ENCODE measurements at regions of chr6 and their contacts with region 1.

Region 1: GRCh38 chr6:140124498-140124897 is 750.0 kb upstream of the CITED2 start:
- DNase-seq: no peak
- ATAC-seq: no peak
- H3K4me3 ChIP-seq: no peak overlapping the region
- H3K4me3 Mint-ChIP-seq: no peak overlapping the region
- H3K27ac ChIP-seq: no peak overlapping the region
- H3K27ac Mint-ChIP-seq: no peak overlapping the region
- H3K4me1 ChIP-seq: no peaks in the 10 kb centered on the region
- H3K4me1 Mint-ChIP-seq: no peaks in the 10 kb centered on the region
- H3K27me3 ChIP-seq: no peaks in the 10 kb centered on the region
- H3K27me3 Mint-ChIP-seq: peaks cover 8% of the 10 kb centered on the region
- CTCF ChIP-seq: no peak

Region 2: DNA sequence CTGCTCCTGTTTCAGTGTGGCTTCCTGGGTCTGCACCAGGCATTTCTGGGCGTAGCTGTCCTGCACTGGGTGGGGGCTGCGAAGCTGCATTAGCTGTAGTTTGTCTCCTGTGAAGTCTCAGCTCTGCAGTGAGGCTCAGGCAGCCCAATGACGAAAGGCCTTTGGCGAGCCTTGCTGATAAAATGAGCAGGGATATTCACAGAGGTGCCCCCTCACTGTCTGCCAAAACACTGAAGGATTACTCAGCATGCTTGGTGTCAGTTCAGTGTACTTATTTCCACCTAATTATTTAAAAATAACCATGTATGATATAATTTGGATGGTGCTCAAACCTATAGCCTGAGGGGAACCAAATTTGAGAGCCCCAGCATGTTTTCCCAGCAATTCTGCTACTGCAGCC is 1255.1 kb before region 1 on chr6:
- CTCF ChIA-PET with region 1: no interaction called
- POLR2A ChIA-PET with region 1: no interaction called
- intact Hi-C with region 1: loop called in 1 of 2 experiments (anchors 10 kb)
- DNase-seq: no peak
- ATAC-seq: no peak
- H3K4me3 ChIP-seq: no peak overlapping the region
- H3K4me3 Mint-ChIP-seq: no peak overlapping the region
- H3K27ac ChIP-seq: no peak overlapping the region
- H3K27ac Mint-ChIP-seq: no peak overlapping the region
- H3K4me1 ChIP-seq: no peaks in the 10 kb centered on the region
- H3K4me1 Mint-ChIP-seq: no peaks in the 10 kb centered on the region
- H3K27me3 ChIP-seq: no peaks in the 10 kb centered on the region
- H3K27me3 Mint-ChIP-seq: peaks cover 5% of the 10 kb centered on the region
- CTCF ChIP-seq: no peak

Measured in CD8-positive, alpha-beta T cell (primary cell).